ENCODE measurements at regions of chr21 and their contacts with region 1.

Region 1: GRCh38 chr21:35603494-35603893 is 456.8 kb downstream of the SETD4 start:
- DNase-seq: no peak
- H3K4me3 ChIP-seq: no peak overlapping the region
- H3K27ac ChIP-seq: no peak overlapping the region
- H3K4me1 ChIP-seq: no peaks in the 10 kb centered on the region
- H3K27me3 ChIP-seq: no peaks in the 10 kb centered on the region
- CTCF ChIP-seq: no peak; the same call in 1 of the 2 replicates

Region 2: GRCh38 chr21:35674895-35675470 is 71.5 kb after region 1 on chr21:
- CTCF ChIA-PET with region 1: interaction called, 11 read pairs
- POLR2A ChIA-PET with region 1: no interaction called
- intact Hi-C with region 1: no loop called
- DNase-seq: no peak
- H3K4me3 ChIP-seq: no peak overlapping the region
- H3K27ac ChIP-seq: no peak overlapping the region
- H3K4me1 ChIP-seq: 0 out of 2 replicates have a peak, but pooled peaks cover 6% of the 10 kb centered on the region
- H3K27me3 ChIP-seq: no peaks in the 10 kb centered on the region
- CTCF ChIP-seq: no peak

Region 3: GRCh38 chr21:35754583-35754982 is 151.1 kb after region 1 on chr21:
- CTCF ChIA-PET with region 1: no interaction called
- POLR2A ChIA-PET with region 1: no interaction called
- intact Hi-C with region 1: no loop called
- DNase-seq: no peak
- H3K4me3 ChIP-seq: no peak overlapping the region
- H3K27ac ChIP-seq: no peak overlapping the region
- H3K4me1 ChIP-seq: no peaks in the 10 kb centered on the region
- H3K27me3 ChIP-seq: no peaks in the 10 kb centered on the region
- CTCF ChIP-seq: no peak